Activated naive CD4-positive, alpha-beta T cell treated with anti-CD3 and anti-CD28 coated beads for 36 hours (primary cell): ENCODE measurements at regions of chr17 and their contacts with region 1.

Region 1: DNA sequence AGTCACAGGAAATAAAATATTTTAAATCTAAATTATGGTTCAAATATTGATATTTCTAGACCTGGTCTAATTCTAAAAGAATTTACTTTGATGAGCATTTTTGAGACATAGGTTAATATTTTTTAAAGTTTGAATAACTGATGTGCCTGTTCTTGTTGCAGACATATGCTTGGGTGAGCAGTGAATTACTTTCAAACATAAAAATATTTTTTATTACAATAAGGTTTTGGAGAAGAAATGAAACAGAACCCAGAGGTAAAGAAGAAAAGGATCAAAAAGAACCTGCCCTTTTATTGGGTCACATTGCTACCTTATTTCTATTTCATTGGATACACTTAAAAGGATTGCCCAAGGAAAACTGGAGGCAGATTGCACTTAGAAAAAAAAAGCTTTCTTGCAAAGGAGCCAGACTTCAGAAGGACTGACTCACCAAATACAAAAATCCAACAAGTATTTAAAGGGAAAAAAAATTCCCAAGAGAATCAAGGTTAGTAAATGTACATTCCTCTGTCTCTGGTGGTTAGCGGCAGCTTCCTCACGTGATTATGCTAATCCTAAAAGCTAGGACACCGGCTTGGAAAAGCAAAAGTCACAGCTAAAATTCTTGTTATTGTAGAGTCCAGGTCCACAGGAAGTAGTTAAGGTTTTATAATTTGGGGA is 18.5 kb downstream of the ENPP7 start:
- DNase-seq: no peak
- H3K4me3 Mint-ChIP-seq: no peak overlapping the region
- H3K27ac Mint-ChIP-seq: no peak overlapping the region
- H3K4me1 Mint-ChIP-seq: peaks cover 23% of the 10 kb centered on the region
- H3K27me3 Mint-ChIP-seq: peaks cover 34% of the 10 kb centered on the region

Region 2: GRCh38 chr17:79513820-79514535 is 235.3 kb before region 1 on chr17:
- CTCF ChIA-PET with region 1: no interaction called
- intact Hi-C with region 1: no loop called
- DNase-seq: no peak
- H3K4me3 Mint-ChIP-seq: no peak overlapping the region
- H3K27ac Mint-ChIP-seq: no peak overlapping the region
- H3K4me1 Mint-ChIP-seq: no peaks in the 10 kb centered on the region
- H3K27me3 Mint-ChIP-seq: peaks cover 8% of the 10 kb centered on the region

Region 3: DNA sequence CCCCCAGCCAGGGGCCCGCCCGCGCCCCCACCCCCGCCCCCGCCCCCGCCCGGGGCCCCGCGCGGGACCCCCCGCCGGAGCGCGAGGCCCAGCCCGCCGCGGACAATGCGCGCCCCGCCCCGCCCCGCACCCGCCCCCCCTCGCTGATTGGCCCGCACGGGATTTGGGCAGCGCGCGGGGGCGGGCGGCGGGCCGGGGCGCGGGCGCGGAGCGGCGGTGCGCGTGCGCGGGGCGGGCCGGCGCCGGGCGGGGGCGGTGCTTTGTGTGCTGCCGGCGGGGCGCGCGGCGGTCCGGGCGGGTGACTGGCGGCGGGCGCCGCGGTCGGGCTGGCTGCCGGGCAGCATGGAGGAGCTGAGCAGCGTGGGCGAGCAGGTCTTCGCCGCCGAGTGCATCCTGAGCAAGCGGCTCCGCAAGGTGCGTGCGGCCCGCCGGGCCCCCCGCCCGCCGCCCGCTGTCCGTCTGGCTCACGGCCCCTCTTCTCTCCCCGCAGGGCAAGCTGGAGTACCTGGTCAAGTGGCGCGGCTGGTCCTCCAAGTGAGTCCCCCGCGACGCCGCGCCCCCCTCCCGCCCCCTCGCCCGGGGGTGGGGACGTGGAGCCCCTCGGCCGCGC is 28.7 kb after region 1 on chr17 and contains the start of gene CBX2:
- CTCF ChIA-PET with region 1: interaction called, 10 read pairs
- intact Hi-C with region 1: loop called (anchors 1 kb)
- DNase-seq: peak; percentile 81
- H3K4me3 Mint-ChIP-seq: peak within 1 kb of the TSS; percentile 82
- H3K27ac Mint-ChIP-seq: no peak within 1 kb of the TSS
- H3K4me1 Mint-ChIP-seq: peaks cover 12% of the 10 kb centered on the region
- H3K27me3 Mint-ChIP-seq: peaks cover 68% of the 10 kb centered on the region
- total RNA-seq, gene CBX2: 5.2 to 5.8 TPM

Region 4: GRCh38 chr17:79789534-79790353 is 40.5 kb after region 1 on chr17:
- CTCF ChIA-PET with region 1: interaction called, 9 read pairs
- intact Hi-C with region 1: loop called (anchors 2 kb)
- DNase-seq: no peak
- H3K4me3 Mint-ChIP-seq: no peak overlapping the region
- H3K27ac Mint-ChIP-seq: no peak overlapping the region
- H3K4me1 Mint-ChIP-seq: peaks cover 8% of the 10 kb centered on the region
- H3K27me3 Mint-ChIP-seq: peaks cover 53% of the 10 kb centered on the region

Region 5: DNA sequence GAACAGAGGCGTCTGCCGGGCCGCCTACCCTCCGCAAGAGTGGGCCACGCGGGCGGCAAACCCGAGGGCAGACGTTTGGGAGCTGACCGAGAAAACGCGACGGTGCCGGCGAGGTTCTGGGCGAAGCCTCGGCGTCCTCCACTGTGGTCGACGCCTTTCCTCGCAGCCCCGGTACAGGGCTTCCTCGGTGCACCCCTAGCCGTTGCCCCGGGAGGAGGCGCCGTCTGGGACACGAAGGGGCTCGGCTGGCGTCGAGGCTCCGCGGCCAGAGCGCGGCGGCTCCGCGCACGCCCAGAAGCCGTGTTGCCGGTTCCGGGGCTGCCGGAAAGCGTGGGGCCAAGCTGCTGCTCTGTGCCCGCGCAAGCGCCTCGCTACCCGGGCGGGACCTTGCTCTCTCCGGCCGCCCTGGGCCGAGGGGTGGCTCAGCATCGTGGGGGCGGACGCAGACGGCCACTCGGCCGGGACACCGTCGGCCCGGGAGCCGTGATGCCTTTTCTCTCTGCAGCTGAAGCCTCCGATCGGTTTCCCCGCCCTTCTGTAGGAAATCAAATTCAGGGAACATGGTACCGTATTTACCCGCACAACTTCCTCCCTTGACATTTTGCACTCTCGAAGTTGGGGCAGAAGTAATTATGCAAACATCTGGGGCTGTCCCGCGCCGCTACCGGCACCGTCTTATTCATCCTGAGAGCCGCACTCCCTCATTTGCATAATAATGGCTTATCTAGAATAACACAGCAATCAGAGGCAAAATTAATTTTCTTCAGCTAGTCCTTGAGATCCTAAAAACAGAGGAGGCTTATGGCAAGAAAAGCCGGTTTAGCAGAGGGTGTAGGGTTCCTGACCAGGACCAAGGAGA is 54.9 kb after region 1 on chr17:
- CTCF ChIA-PET with region 1: interaction called, 3 read pairs
- intact Hi-C with region 1: loop called (anchors 2 kb)
- DNase-seq: peak; percentile 94
- H3K4me3 Mint-ChIP-seq: peak overlapping the region; percentile 67
- H3K27ac Mint-ChIP-seq: peak overlapping the region; percentile 74
- H3K4me1 Mint-ChIP-seq: peaks cover 44% of the 10 kb centered on the region
- H3K27me3 Mint-ChIP-seq: peaks cover 85% of the 10 kb centered on the region

Region 6: DNA sequence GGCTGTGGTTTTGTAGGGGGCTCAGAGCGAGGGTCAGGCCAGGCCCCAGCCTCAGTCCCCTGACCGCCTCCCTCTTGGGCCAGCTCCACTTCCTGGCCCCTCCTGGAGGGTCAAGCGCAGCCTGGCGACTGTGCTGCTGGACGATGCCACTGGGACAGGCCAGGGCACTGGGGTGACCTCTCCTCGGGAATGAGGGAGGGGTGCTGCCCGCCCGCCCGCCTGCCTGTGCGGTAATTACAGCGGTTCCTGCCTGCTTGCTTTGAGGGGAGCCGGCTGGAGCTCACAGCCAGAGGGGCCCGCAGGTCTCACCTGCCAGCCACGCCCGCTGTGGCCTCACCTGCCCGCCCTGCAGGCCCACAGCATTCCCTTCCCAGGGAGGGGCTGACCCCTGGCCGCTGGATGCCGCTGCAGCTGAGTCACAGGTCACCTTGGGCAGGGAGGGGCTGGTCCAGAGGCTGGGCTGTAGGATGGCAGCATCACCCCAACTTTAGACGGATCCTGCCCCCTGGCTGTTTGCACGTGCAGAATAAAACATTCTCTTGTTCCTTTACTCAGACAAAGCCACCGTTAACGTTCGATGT is 166.7 kb after region 1 on chr17:
- CTCF ChIA-PET with region 1: no interaction called
- intact Hi-C with region 1: loop called (anchors 5 kb)
- DNase-seq: peak; percentile 66
- H3K4me3 Mint-ChIP-seq: no peak overlapping the region
- H3K27ac Mint-ChIP-seq: no peak overlapping the region
- H3K4me1 Mint-ChIP-seq: no peaks in the 10 kb centered on the region
- H3K27me3 Mint-ChIP-seq: peaks cover 2% of the 10 kb centered on the region

Region 7: GRCh38 chr17:79970576-79971068 is 221.3 kb after region 1 on chr17:
- CTCF ChIA-PET with region 1: interaction called, 5 read pairs
- intact Hi-C with region 1: loop called (anchors 5 kb)
- DNase-seq: peak; percentile 66
- H3K4me3 Mint-ChIP-seq: no peak overlapping the region
- H3K27ac Mint-ChIP-seq: no peak overlapping the region
- H3K4me1 Mint-ChIP-seq: no peaks in the 10 kb centered on the region
- H3K27me3 Mint-ChIP-seq: no peaks in the 10 kb centered on the region

Region 8: DNA sequence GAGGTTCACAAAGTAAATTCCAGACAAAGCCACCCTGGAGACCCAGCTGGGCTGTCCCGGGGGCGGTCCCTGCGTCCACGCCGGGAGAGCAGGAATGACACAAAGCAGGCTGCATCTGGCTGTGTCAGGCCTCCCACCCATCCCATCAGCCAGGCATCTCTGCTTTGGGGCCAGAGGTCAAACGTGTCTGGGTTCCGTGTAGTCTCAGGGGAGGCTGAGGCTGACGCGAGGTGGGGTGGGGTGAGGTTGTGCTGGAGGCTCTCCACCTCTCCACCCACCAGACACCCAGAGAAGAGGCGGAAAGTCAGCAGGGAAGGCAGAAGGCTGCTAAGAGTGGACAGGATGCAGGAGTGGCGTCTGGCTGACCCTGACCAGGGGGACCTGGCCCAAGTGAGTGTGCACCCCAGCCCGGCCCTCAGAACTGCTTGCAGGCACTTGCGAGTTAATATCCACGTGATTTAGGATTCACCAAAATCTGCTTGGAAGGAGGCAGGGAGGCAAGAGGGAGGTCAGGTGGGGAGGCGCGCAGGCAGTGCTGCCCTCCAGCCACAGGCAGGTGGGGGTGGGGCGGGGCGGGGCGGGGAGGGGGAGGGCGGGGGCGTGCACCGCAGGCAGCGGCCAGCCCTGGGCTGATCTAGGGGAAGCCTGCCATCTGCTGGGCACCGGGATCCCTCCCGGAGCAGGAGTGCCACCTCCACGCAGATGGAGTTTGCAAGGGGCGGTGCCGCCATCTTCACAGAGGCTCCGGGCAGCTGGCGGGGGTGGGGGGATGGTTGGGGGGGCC is 242.0 kb after region 1 on chr17:
- CTCF ChIA-PET with region 1: interaction called, 12 read pairs
- intact Hi-C with region 1: loop called (anchors 1 kb)
- DNase-seq: peak; percentile 95
- H3K4me3 Mint-ChIP-seq: peak overlapping the region; percentile 86
- H3K27ac Mint-ChIP-seq: no peak overlapping the region
- H3K4me1 Mint-ChIP-seq: peaks cover 40% of the 10 kb centered on the region
- H3K27me3 Mint-ChIP-seq: no peaks in the 10 kb centered on the region